ENCODE measurements at regions of chr1 and their contacts with region 1.

Region 1: DNA sequence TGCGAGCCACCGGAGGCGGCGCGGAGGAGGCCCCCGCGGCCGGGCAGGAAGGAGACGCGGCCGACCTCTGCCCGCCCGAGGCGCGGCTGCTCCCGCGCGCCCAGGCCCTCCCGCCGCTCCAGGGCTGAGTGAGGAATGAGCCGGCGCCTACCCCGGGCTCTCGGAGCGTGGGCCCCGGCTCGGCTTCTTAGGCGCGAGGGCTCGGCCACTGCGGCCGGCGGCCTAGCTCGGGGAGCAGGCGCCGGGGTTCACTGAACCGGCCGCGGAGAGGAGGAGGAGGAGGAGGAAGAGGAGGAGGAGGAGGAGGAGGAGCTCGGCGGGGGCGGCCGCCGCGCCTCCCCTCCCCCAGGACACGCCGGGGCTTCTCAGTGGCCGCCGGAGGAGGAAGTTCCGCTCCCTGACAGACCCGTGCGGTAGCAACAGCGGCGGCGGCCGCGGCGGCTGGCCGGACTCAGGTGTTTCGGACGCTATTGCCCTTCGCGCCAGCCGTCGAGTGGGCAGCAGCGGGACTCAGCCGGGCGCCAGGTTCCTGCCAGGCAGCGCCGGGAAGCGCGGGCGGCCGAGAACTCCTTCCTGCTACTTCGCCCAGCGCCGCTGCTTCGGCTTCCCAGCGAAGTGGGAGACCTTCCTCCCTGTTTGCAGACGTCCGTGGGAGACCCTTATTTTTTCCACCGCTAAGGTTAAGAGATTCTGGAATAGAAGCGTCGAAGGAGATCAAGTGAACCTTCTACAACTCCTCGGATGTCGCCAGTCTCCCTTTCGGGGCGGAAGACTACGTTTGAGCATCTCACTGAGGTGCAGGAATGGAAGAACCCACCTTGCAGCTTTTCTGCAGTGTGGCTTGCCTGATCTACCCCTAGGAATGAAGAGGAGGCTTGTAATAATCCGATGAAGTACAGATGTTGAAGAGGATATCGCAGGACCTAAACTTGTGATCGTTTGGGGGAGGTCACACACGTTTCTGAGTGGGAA is at the start of gene MAN1A2:
- DNase-seq: peak; percentile 82 to 93 (median 86)
- ATAC-seq: peak; percentile 77
- H3K4me3 ChIP-seq: peak within 1 kb of the TSS; percentile 75
- H3K27ac ChIP-seq: peak within 1 kb of the TSS; percentile 94
- H3K4me1 ChIP-seq: peaks cover 8 to 27% of the 10 kb centered on the region in 2 experiments; a peak in 4 of 5 replicates
- H3K27me3 ChIP-seq: no peaks in the 10 kb centered on the region
- CTCF ChIP-seq: no peak
- EP300 ChIP-seq: peak; percentile 26; the same call in 1 of the 2 replicates
- POLR2A ChIP-seq: peak; percentile 73
- RAD21 ChIP-seq: no peak
- polyA plus RNA-seq, gene MAN1A2: 4.2 to 4.6 TPM

Region 2: DNA sequence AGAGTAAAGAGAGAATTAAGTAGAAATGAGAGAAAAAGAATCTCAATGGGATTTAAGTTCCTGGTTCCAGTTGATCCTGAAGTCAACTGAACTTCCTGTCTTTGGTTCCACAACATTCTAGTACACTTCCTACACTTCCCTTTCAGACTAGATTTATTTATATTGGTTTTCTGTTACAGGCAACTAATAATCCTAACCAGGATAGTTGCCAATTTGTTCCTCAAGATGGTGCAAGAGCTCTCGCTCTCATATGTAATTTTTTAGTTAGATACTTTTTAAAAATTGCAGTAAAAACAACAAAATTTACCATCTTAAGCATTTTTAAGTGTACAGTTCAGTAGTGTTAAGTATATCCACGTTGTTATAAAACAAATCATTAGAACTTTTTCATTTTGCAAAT is 217.0 kb before region 1 on chr1:
- CTCF ChIA-PET with region 1: no interaction called
- POLR2A ChIA-PET with region 1: no interaction called
- in situ Hi-C with region 1: no loop called
- intact Hi-C with region 1: no loop called
- DNase-seq: no peak
- ATAC-seq: no peak
- H3K4me3 ChIP-seq: no peak overlapping the region
- H3K27ac ChIP-seq: no peak overlapping the region
- H3K4me1 ChIP-seq: no peaks in the 10 kb centered on the region
- H3K27me3 ChIP-seq: peaks cover 11 to 19% of the 10 kb centered on the region in 2 experiments; a peak in 4 of 5 replicates
- CTCF ChIP-seq: peak in 1 of 3 experiments; percentile 17; a peak in 1 of 6 replicates
- EP300 ChIP-seq: no peak
- POLR2A ChIP-seq: no peak
- RAD21 ChIP-seq: peak in 1 of 2 experiments; percentile 22; a peak in 1 of 4 replicates

Region 3: GRCh38 chr1:117388328-117388727 is 21.0 kb after region 1 on chr1:
- CTCF ChIA-PET with region 1: no interaction called
- POLR2A ChIA-PET with region 1: interaction called, 10 read pairs
- in situ Hi-C with region 1: no loop called
- intact Hi-C with region 1: no loop called
- DNase-seq: no peak
- ATAC-seq: peak; percentile 44; the same call in 2 of the 3 replicates
- H3K4me3 ChIP-seq: no peak overlapping the region
- H3K27ac ChIP-seq: no peak overlapping the region
- H3K4me1 ChIP-seq: peaks cover 0 to 10% of the 10 kb centered on the region in 2 experiments; a peak in 2 of 5 replicates
- H3K27me3 ChIP-seq: no peaks in the 10 kb centered on the region
- CTCF ChIP-seq: no peak
- EP300 ChIP-seq: no peak
- POLR2A ChIP-seq: no peak
- RAD21 ChIP-seq: no peak

Region 4: GRCh38 chr1:117493906-117494305 is 126.6 kb after region 1 on chr1:
- CTCF ChIA-PET with region 1: no interaction called
- POLR2A ChIA-PET with region 1: no interaction called
- in situ Hi-C with region 1: no loop called
- intact Hi-C with region 1: loop called (anchors 5 kb)
- DNase-seq: no peak
- ATAC-seq: no peak
- H3K4me3 ChIP-seq: no peak overlapping the region
- H3K27ac ChIP-seq: no peak overlapping the region
- H3K4me1 ChIP-seq: peaks cover 0 to 9% of the 10 kb centered on the region in 2 experiments; a peak in 2 of 5 replicates
- H3K27me3 ChIP-seq: no peaks in the 10 kb centered on the region
- CTCF ChIP-seq: no peak
- EP300 ChIP-seq: no peak
- POLR2A ChIP-seq: no peak
- RAD21 ChIP-seq: no peak

Measured in K562 (cell line).